ENCODE measurements at regions of chr19 and their contacts with region 1.

Region 1: DNA sequence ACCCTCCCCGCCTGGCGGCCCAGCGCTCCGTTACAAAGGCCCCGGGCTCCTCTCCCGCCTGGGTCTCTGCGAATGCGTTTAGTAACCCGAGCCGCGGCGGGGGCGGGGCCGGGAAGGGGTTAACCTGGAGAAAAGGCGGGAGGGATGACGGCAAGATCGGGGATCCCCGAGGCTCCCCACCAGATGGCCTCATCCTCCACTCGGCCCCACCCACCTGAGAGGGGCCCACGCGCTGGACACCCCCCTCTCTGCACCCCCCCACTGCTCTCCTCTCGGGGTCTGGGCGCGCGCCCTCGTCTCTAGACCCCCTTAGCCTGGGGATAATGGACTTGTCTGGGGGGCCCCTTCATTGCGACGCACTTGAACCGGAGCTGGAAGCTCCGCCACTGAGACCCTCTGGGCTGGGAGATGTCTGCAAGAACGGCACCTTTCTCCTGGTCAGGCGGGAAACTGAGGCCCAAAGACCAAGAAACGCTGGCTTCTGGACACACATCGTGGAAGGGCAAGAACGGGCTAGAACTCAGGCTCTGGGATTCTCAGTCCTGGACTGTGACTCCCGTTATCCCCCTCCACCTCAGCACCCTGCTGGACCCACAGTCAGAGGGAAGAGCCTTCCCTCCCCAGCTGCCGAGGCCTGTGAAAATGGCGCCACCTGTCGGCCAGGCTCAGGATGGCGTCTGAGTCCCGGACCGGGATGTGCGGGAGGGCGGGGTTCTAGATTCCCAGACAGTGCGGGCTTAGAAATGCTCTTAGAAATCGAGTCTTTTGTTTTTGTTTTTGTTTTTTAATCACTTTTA is 2.9 kb upstream of the LTBP4 start:
- DNase-seq: no peak
- ATAC-seq: peak; percentile 77
- H3K4me3 ChIP-seq: peak overlapping the region; percentile 50 to 59
- H3K27ac ChIP-seq: peak overlapping the region; percentile 66; the same call in 1 of the 2 replicates
- H3K4me1 ChIP-seq: peaks cover 22% of the 10 kb centered on the region
- H3K27me3 ChIP-seq: no peaks in the 10 kb centered on the region
- CTCF ChIP-seq: peak; percentile 93

Region 2: DNA sequence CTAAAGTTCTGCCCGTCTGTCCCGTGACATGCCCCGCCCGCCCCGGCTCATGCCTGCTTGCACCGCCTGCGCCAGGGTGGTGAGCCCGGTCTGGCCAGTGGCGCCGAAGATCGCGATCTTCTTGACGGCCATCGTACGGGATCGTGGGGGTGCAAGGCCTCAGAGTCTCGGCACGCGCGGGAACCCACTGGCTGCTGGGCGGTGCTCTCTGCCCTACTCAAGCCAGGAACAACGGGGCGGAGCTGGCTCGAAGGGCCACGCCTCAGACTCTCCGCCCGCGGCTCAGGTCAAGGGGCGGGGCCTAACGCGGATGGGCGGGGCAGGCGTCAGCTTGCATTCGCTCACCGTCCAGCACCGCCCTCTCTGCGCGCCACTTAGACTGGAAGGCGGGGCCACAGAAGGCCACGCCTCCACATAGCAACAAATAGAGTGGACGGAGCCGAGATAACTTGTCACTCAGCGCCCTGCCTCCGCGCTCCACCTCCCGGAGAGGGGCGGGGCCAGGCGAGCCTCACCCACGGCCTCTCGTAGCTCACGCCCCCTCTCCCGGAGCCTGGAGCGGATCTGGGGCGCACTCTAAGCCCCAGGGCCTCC is 132.7 kb before region 1 on chr19 and contains the start of gene BLVRB:
- CTCF ChIA-PET with region 1: no interaction called
- POLR2A ChIA-PET with region 1: no interaction called
- in situ Hi-C with region 1: no loop called
- intact Hi-C with region 1: no loop called
- DNase-seq: peak; percentile 92
- ATAC-seq: peak; percentile 96
- H3K4me3 ChIP-seq: peak within 1 kb of the TSS; percentile 68 to 82
- H3K27ac ChIP-seq: peak within 1 kb of the TSS; percentile 82
- H3K4me1 ChIP-seq: peaks cover 10% of the 10 kb centered on the region; the same call in 1 of the 2 replicates
- H3K27me3 ChIP-seq: no peaks in the 10 kb centered on the region
- CTCF ChIP-seq: no peak
- total RNA-seq, gene BLVRB: 45.6 TPM

Region 3: GRCh38 chr19:40549007-40549708 is 49.2 kb before region 1 on chr19:
- CTCF ChIA-PET with region 1: interaction called, 4 read pairs
- POLR2A ChIA-PET with region 1: no interaction called
- in situ Hi-C with region 1: no loop called
- intact Hi-C with region 1: loop called (anchors 5 kb)
- DNase-seq: no peak
- ATAC-seq: peak; percentile 99
- H3K4me3 ChIP-seq: peak overlapping the region in 1 of 2 experiments; percentile 24; a peak in 2 of 4 replicates
- H3K27ac ChIP-seq: no peak overlapping the region
- H3K4me1 ChIP-seq: no peaks in the 10 kb centered on the region; the same call in 1 of the 2 replicates
- H3K27me3 ChIP-seq: no peaks in the 10 kb centered on the region
- CTCF ChIP-seq: peak; percentile 79